Panc1 (cell line): ENCODE measurements at regions of chr1 and their contacts with region 1.

Region 1: DNA sequence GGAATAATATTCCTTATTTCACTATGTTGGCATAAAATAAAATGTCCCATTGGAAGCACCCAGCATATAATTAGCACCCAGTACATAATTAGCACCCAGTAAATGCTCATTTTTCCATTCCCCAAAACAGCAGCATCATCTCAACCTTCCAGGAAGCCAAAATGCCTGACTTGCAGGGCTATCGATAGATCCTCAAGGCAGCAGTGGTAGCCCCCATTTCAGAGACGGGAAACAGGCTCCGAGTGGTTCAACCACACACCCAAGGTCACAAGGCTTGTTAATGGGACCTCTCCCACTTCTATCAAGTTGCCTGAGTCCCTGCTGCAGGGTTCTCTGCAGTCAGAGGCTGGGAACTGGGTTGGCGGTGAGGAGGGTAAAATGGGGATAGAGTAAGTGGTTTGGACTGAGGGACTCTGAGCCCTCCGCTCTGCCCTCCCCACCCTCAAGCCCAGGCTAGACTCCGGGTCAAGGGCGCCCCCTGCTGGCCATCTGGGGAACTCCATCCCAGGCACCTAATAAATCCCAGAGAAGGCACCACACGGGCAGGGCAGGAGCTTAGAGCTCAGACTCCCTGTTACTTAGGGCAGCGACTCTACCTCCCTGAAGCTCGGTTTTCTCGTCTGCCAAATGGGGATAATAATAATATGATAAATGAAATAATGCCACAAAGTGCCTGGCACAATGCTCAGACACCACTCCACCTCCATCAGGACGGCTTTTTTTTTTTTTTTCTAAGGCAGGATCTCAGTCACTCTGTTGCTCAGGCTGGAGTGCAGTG is 21.9 kb upstream of the LAPTM5 start:
- DNase-seq: peak; percentile 62
- ATAC-seq: peak; percentile 83
- H3K4me3 ChIP-seq: no peak overlapping the region
- H3K27ac ChIP-seq: no peak overlapping the region
- H3K4me1 ChIP-seq: no peaks in the 10 kb centered on the region; the same call in none of the 2 replicates
- H3K27me3 ChIP-seq: no peaks in the 10 kb centered on the region
- CTCF ChIP-seq: peak; percentile 96

Region 2: DNA sequence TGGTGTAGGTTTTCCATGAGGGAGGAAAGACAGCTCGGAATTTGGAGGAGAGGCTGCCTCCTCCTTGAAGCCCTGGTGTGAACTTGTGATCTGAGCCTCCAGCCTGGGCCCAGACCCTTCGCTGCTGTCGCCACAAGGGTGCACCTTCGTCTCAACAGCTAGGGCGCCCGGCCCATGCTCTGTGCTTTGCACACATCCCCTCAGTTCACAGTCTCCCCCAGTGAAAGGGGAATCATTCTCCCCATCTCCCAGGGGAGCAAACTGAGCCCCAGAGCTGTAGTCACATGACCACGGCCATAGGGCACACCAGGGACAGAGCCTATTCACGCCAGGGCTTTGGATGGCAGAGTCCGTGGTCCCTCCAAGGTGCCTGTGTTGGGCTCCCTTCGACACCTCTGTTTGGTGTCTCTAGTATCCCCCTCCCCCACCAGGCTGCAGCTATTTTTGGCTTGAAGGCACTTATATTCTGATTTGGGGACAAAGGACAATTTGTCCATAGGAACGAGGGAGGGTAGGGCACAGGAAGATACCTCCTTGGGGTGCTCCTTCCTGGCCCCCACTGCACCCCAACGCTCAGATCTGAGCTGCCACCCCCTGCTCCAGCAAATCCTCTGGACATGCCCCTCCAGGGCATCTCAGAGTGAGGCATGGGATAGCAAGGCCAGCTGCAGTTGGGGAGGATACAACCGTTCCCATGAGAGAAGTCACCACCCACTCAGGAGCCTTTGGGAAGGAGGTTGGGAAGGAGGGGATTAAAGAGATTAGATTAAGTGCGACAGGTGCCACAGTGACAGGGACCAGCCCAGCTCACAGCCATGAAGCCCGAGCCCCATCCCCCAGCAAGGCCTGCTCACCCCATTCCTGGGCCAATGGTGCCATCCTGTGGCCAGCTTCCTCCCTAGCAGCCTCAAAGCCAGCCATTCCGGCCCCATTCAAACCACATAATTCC is 71.8 kb before region 1 on chr1:
- CTCF ChIA-PET with region 1: interaction called, 11 read pairs
- POLR2A ChIA-PET with region 1: no interaction called
- in situ Hi-C with region 1: no loop called
- intact Hi-C with region 1: no loop called
- DNase-seq: peak; percentile 33
- ATAC-seq: peak; percentile 91
- H3K4me3 ChIP-seq: no peak overlapping the region
- H3K27ac ChIP-seq: no peak overlapping the region
- H3K4me1 ChIP-seq: no peaks in the 10 kb centered on the region
- H3K27me3 ChIP-seq: no peaks in the 10 kb centered on the region; the same call in 1 of the 2 replicates
- CTCF ChIP-seq: peak; percentile 86

Region 3: GRCh38 chr1:30718636-30719405 is 60.7 kb before region 1 on chr1:
- CTCF ChIA-PET with region 1: interaction called, 74 read pairs
- POLR2A ChIA-PET with region 1: interaction called, 10 read pairs
- in situ Hi-C with region 1: no loop called
- intact Hi-C with region 1: loop called (anchors 1 kb)
- DNase-seq: no peak
- ATAC-seq: peak; percentile 84
- H3K4me3 ChIP-seq: peak overlapping the region; percentile 71 to 80
- H3K27ac ChIP-seq: peak overlapping the region; percentile 86
- H3K4me1 ChIP-seq: peaks cover 7% of the 10 kb centered on the region; the same call in 1 of the 2 replicates
- H3K27me3 ChIP-seq: no peaks in the 10 kb centered on the region
- CTCF ChIP-seq: peak; percentile 92

Region 4: DNA sequence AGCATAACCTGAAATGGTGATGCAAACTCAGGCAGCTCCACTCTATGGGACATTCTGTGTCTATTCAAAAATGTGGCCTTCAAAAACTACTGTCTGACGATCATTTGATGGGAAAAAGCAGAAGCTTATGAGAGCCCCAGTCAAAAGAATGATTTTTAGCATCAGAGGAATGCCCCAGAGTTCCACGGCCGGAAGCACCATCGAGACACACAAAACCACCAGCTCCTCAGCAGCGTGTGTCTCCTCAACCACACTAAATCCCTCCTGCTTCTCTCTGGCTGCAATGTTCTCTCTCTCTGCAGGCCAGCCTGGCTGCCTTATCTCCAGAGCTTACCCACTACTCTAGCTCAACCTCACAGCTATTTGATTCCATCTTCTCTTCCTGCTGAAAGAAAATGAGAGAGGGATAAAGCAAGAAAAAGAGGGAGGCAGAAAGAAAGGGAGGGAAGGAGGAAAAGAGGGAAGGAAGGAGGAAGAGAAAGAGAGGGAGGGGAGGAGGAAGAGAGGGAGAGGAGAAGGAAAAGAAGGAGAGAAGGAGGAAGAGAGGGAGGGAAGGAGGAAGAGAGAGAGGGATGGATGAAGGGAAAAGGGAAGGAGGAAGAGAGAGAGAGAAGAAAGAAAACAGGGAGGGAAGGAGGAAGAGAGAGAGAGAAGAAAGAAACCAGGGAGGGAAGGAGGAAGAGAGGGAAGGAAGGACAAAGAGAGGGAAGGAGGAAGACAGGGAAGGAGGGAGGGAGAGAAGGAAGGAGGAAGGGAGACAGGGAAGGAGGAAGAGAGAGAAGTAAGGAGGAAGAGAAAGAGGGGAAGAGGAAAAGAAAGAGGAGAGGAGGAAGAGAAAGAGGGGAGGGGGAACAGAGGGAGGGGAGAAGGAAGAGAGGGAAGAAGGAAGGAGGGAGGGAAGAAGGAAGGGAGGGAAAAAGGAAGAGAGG is 11.6 kb after region 1 on chr1:
- CTCF ChIA-PET with region 1: interaction called, 4 read pairs
- POLR2A ChIA-PET with region 1: interaction called, 19 read pairs
- in situ Hi-C with region 1: no loop called
- intact Hi-C with region 1: no loop called
- DNase-seq: no peak
- ATAC-seq: no peak
- H3K4me3 ChIP-seq: no peak overlapping the region
- H3K27ac ChIP-seq: no peak overlapping the region
- H3K4me1 ChIP-seq: no peaks in the 10 kb centered on the region
- H3K27me3 ChIP-seq: peaks cover 6% of the 10 kb centered on the region
- CTCF ChIP-seq: no peak

Region 5: DNA sequence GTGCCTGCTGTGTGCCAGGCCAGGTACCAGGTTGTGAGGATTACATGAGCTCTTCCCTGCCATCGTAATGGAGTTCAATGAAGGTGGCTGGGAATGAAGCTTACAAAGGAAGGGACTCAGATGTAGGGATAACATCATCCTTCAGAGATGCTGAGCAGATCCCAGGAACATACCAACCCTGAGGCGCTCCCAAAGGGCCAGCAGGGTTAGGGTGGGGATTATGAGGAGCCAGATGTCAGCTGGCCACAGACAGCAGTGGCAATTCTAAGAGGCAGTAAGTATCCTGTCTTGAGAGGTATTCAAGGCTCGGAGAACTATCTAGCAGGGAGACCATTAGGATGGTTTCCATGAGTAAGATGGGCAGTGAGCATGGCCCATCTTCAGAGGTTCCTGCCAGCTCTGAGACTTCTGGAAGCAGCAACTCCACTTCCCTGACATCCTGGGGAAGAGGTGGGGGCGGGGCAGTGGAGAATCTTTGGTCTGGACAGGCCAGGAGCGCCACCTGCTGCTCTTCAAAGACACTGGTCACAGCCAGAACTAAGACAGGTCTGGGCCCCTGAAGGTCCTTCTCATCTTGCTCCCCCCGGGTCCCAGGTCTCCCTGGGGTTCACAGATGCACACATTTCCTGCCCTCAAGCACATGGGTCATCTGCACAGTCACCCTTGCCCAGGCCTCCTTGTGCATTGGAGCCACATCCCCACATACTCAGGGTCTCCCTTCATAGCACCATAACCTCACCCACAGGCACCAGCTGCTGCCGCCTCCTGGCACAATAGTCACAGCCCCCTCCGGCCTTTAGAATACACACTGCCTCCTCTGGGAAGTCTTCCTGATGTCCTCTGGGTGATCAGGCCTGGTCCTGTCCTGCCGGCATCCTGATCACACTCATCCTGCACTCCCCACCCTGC is 131.8 kb after region 1 on chr1:
- CTCF ChIA-PET with region 1: interaction called, 9 read pairs
- POLR2A ChIA-PET with region 1: no interaction called
- in situ Hi-C with region 1: no loop called
- intact Hi-C with region 1: loop called (anchors 1 kb)
- DNase-seq: peak; percentile 53
- ATAC-seq: peak; percentile 79
- H3K4me3 ChIP-seq: no peak overlapping the region
- H3K27ac ChIP-seq: no peak overlapping the region
- H3K4me1 ChIP-seq: peaks cover 10% of the 10 kb centered on the region
- H3K27me3 ChIP-seq: no peaks in the 10 kb centered on the region
- CTCF ChIP-seq: peak; percentile 93

Region 6: GRCh38 chr1:30929135-30929889 is 149.8 kb after region 1 on chr1:
- CTCF ChIA-PET with region 1: interaction called, 3 read pairs
- POLR2A ChIA-PET with region 1: no interaction called
- in situ Hi-C with region 1: no loop called
- intact Hi-C with region 1: loop called (anchors 5 kb)
- DNase-seq: no peak
- ATAC-seq: peak; percentile 83
- H3K4me3 ChIP-seq: no peak overlapping the region
- H3K27ac ChIP-seq: no peak overlapping the region
- H3K4me1 ChIP-seq: no peaks in the 10 kb centered on the region
- H3K27me3 ChIP-seq: no peaks in the 10 kb centered on the region
- CTCF ChIP-seq: peak; percentile 88